ENCODE measurements at regions of chr15 and their contacts with region 1.

Region 1: DNA sequence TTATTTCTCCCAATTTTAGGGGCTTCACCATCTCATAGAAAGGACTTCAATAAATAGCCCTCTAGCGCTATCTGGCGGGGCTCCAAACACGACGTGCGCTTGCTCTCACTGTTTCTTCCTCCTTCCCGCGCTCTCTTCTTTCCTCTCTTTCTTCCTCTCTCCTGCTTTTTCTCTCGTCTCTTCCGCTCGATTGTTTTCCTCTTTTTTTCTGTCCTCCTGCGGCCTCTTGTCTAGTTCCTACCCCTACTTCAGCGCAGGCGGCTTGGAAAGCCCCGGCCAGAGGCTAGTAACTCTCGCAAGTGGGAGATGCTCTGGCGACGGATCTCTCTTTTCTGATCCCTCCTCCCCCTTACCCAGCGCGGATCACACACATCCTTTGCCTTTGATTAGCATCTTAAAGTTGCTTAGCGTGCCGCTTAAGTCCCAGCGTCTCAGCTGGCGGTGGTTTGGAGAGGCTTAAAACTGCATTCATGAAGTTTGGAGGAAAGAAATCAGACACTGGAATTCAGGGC is 6.2 kb upstream of the MEIS2 start:
- DNase-seq: peak; percentile 83
- ATAC-seq: no peak

Region 2: DNA sequence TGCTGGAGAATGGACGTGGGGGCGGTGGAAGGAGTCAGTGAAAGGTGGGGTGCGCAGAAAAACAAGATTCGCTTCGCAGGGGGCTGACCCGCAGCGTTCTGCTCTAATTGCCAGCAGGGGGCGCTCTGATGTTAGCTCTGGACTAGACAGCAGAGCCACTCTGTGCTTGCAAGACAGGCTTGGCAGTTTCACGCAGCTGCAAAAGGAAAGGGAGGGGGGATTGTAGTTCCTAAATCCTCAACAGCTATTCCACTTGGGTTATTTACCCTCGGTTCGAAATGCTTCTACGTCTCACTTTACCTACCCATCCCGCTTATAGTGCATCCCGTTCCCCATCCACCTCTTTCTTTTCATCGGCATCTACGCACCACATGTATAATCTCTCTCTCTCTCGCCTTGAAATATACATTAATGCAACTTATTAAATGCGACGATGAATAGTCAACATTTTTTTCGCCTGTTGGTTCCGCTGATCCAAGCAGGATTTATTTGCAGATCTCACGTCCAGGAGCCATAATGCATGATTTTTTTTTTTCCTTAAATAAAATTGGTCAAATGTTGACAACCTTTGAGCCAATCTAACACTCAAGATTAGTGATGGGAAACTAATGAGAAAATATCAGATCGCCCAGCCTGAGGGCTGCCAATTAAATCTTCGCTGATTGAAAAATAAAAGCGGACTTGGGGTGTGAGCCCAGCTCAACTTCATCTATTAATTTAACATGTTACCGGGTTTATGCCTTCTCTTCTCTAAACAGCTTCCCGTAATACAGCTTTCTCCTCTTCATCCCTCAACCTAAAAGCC is 222.6 kb before region 1 on chr15:
- intact Hi-C with region 1: loop called (anchors 5 kb)
- DNase-seq: peak; percentile 92
- ATAC-seq: peak; percentile 92

Measured in Right ventricle myocardium superior (tissue), 1 donor.